ENCODE measurements at regions of chr18 and their contacts with region 1.

Region 1: GRCh38 chr18:41886126-41886807 is 68.8 kb upstream of the PIK3C3 start:
- DNase-seq: no peak
- H3K4me3 ChIP-seq: no peak overlapping the region
- H3K27ac ChIP-seq: no peak overlapping the region
- H3K4me1 ChIP-seq: no peaks in the 10 kb centered on the region
- H3K27me3 ChIP-seq: no peaks in the 10 kb centered on the region
- CTCF ChIP-seq: no peak
- POLR2A ChIP-seq: no peak

Region 2: GRCh38 chr18:41569867-41570266 is 316.4 kb before region 1 on chr18:
- intact Hi-C with region 1: loop called (anchors 2 kb)
- DNase-seq: no peak
- H3K4me3 ChIP-seq: no peak overlapping the region
- H3K27ac ChIP-seq: no peak overlapping the region
- H3K4me1 ChIP-seq: no peaks in the 10 kb centered on the region
- H3K27me3 ChIP-seq: no peaks in the 10 kb centered on the region
- CTCF ChIP-seq: no peak
- POLR2A ChIP-seq: no peak

Region 3: GRCh38 chr18:41829647-41830516 is 56.4 kb before region 1 on chr18:
- intact Hi-C with region 1: no loop called
- DNase-seq: no peak
- H3K4me3 ChIP-seq: no peak overlapping the region
- H3K27ac ChIP-seq: no peak overlapping the region
- H3K4me1 ChIP-seq: no peaks in the 10 kb centered on the region
- H3K27me3 ChIP-seq: no peaks in the 10 kb centered on the region
- CTCF ChIP-seq: no peak
- POLR2A ChIP-seq: no peak